ENCODE measurements at regions of chr5 and their contacts with region 1.

Region 1: GRCh38 chr5:10283927-10284635 is 23.6 kb downstream of the CMBL start:
- DNase-seq: peak; percentile 89
- ATAC-seq: peak; percentile 94
- H3K4me3 Mint-ChIP-seq: no peak overlapping the region
- H3K27ac Mint-ChIP-seq: no peak overlapping the region
- H3K4me1 Mint-ChIP-seq: peaks cover 14% of the 10 kb centered on the region
- H3K27me3 Mint-ChIP-seq: peaks cover 2% of the 10 kb centered on the region

Region 2: DNA sequence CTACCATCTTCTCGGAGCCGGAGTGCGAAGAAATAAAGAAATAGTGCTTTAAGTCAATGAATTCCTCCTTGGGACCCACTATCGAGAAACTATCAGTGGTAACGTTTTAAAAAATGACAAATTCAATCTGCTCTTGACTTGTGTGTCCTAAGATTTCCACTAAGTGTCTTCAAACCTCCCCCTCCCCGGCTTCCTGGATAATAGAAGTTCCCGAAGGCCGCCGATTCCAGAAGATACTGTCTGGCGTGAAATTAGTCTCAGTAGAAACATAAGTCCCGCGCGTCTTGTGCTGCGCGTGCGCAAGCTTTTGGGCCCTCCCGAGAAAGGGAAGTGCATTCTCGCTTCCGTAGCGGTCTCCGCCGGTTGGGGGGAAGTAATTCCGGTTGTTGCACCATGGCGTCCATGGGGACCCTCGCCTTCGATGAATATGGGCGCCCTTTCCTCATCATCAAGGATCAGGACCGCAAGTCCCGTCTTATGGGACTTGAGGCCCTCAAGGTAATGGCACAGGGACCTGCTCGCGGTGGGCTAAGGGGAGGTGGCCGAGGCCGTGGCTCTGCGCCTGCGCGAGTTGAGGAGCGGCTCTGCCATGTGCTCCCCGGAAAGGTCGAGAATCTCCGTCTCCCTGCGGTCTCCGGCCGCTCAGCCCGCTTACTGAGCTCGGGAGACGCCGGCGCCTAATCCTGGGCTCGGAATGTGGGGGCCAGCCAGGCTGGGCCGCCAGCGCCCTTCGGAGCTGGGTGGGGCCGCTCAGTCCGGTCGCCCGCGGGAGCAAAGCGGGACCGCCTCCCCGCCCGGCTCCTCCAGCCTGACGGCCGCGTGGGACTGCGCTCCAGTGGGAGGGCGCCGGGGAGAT is 33.9 kb before region 1 on chr5 and contains the start of gene CCT5:
- CTCF ChIA-PET with region 1: interaction called, 11 read pairs
- POLR2A ChIA-PET with region 1: no interaction called
- intact Hi-C with region 1: loop called in 1 of 2 experiments (anchors 2 kb)
- DNase-seq: peak; percentile 93
- ATAC-seq: peak; percentile 82
- H3K4me3 Mint-ChIP-seq: peak within 1 kb of the TSS; percentile 92
- H3K27ac Mint-ChIP-seq: peak within 1 kb of the TSS; percentile 100
- H3K4me1 Mint-ChIP-seq: peaks cover 47% of the 10 kb centered on the region
- H3K27me3 Mint-ChIP-seq: no peaks in the 10 kb centered on the region
- total RNA-seq, gene CCT5: 347 to 461 TPM

Region 3: DNA sequence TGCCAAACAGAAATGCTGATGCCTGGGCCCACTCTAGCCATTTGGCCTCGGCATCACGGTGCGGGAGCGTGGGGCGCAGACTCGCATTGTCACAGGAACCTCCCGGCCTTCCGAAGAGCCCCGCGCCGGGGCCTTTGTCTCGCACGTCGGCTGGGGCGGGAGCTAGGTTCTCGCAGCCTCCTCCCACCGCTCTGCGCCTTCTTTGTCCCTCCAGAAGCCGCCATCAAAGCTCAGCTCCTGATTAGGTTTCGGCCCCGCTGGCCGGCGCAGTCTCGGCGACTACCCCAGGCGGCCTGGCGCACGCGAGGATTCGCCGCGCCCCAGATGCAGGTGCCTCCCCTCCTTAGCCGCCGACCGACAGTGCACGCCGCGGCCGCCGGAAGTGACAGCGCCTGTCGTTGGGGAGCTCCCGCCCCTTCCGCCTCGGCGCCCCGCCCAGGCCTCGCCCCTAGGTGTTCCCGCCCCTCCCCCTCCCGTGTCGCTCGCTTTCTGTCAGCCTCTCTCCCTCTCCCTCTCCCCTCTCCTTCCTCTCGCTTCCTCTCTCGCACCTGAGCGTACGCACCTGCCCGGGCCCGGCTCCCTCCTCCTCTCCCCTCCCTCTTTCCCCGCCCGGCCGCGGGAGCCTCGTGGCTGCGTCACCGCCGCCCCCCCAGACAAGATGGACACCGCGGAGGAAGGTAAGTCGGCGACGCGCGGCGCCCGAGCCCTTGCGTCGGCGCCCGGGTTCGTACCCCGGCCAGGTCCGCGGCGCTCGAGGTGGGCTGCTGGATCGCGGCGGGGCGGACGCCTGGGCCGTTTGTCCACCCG is 69.4 kb after region 1 on chr5 and contains the start of gene MARCHF6:
- CTCF ChIA-PET with region 1: interaction called, 5 read pairs
- POLR2A ChIA-PET with region 1: no interaction called
- intact Hi-C with region 1: loop called (anchors 1 to 2 kb)
- DNase-seq: peak; percentile 98
- ATAC-seq: peak; percentile 81
- H3K4me3 Mint-ChIP-seq: peak within 1 kb of the TSS; percentile 97
- H3K27ac Mint-ChIP-seq: peak within 1 kb of the TSS; percentile 99
- H3K4me1 Mint-ChIP-seq: peaks cover 39% of the 10 kb centered on the region
- H3K27me3 Mint-ChIP-seq: no peaks in the 10 kb centered on the region
- total RNA-seq, gene MARCHF6: 67.3 to 92.2 TPM

Region 4: DNA sequence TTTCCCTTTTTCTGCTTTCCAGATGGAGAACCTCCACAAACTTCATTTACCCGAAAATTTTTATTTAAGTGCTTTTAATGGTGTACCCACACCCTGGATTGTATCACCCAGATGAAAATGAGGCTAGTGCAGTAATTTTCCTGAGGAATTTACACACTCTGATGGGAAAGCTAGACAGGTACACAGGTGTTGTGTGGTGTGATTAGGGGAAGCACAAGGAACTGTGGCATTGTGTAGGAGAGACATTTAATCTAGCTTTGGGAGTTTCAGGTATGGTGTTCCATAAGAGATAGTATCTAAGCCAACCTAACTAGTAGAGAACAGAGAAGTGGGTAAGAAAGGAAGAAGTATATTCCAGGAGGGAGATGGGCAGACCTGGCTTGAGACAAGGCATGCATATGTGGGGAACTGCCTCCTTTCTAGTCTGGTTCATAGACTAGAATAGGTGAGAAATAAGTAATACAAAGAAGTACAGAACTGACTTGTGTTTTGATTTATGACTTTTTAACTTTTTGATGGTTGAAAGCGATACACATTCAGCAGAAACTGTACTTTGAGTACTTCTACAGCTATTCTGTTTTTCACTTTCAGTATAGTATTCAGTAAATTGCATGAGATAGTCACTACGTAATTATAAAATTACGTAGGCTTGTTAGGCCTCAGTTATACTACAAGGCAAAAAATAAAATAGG is 134.7 kb after region 1 on chr5:
- CTCF ChIA-PET with region 1: interaction called, 36 read pairs
- POLR2A ChIA-PET with region 1: interaction called, 7 read pairs
- intact Hi-C with region 1: loop called in 1 of 2 experiments (anchors 1 kb)
- DNase-seq: peak; percentile 19
- ATAC-seq: peak; percentile 90
- H3K4me3 Mint-ChIP-seq: no peak overlapping the region
- H3K27ac Mint-ChIP-seq: no peak overlapping the region
- H3K4me1 Mint-ChIP-seq: peaks cover 53% of the 10 kb centered on the region
- H3K27me3 Mint-ChIP-seq: no peaks in the 10 kb centered on the region

Region 5: GRCh38 chr5:10441083-10441991 is 157.3 kb after region 1 on chr5 and contains the start of gene ROPN1L:
- CTCF ChIA-PET with region 1: no interaction called
- POLR2A ChIA-PET with region 1: no interaction called
- intact Hi-C with region 1: loop called in 1 of 2 experiments (anchors 5 kb)
- DNase-seq: peak; percentile 87
- ATAC-seq: peak; percentile 98
- H3K4me3 Mint-ChIP-seq: peak within 1 kb of the TSS; percentile 72
- H3K27ac Mint-ChIP-seq: no peak within 1 kb of the TSS
- H3K4me1 Mint-ChIP-seq: peaks cover 31% of the 10 kb centered on the region
- H3K27me3 Mint-ChIP-seq: peaks cover 3% of the 10 kb centered on the region
- total RNA-seq, gene ROPN1L: 0.28 TPM in 1 of 2 experiments, not detected in the other

Measured in activated CD4-positive, alpha-beta T cell treated with anti-CD3 and anti-CD28 coated beads for 36 hours (primary cell).